RWPE1 (cell line): ENCODE measurements at regions of chr2 and their contacts with region 1.

Region 1: DNA sequence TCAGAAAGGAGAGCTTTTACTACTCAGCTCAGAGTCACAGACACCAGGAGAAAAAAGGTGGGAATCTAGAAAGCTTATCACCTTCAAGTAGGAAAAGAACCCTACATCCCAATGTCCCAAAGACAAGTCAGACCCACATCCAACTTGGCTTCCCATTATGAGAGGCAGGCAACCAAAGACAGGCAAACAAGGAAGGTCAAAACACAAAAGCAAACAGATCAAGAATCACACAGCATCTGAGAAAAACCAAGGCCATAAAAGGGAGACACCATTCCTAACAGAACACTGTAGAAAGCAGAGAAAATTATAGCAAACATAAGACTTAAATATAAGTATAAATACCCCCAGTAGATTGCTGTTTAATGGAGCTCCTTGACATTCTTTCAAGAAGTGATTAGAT is 40.7 kb downstream of the SLC3A1 start:
- DNase-seq: no peak
- H3K27ac ChIP-seq: no peak overlapping the region
- CTCF ChIP-seq: no peak

Region 2: GRCh38 chr2:44056947-44057346 is 259.0 kb before region 1 on chr2:
- CTCF ChIA-PET with region 1: no interaction called
- POLR2A ChIA-PET with region 1: interaction called, 11 read pairs
- DNase-seq: no peak
- H3K27ac ChIP-seq: no peak overlapping the region
- CTCF ChIP-seq: no peak

Region 3: GRCh38 chr2:44330801-44331200 is 14.9 kb after region 1 on chr2:
- CTCF ChIA-PET with region 1: no interaction called
- POLR2A ChIA-PET with region 1: no interaction called
- DNase-seq: no peak
- H3K27ac ChIP-seq: no peak overlapping the region
- CTCF ChIP-seq: no peak

Region 4: GRCh38 chr2:44456946-44457345 is 141.0 kb after region 1 on chr2:
- CTCF ChIA-PET with region 1: no interaction called
- POLR2A ChIA-PET with region 1: no interaction called
- DNase-seq: no peak
- H3K27ac ChIP-seq: no peak overlapping the region
- CTCF ChIP-seq: no peak